ENCODE measurements at regions of chr11 and their contacts with region 1.

Region 1: DNA sequence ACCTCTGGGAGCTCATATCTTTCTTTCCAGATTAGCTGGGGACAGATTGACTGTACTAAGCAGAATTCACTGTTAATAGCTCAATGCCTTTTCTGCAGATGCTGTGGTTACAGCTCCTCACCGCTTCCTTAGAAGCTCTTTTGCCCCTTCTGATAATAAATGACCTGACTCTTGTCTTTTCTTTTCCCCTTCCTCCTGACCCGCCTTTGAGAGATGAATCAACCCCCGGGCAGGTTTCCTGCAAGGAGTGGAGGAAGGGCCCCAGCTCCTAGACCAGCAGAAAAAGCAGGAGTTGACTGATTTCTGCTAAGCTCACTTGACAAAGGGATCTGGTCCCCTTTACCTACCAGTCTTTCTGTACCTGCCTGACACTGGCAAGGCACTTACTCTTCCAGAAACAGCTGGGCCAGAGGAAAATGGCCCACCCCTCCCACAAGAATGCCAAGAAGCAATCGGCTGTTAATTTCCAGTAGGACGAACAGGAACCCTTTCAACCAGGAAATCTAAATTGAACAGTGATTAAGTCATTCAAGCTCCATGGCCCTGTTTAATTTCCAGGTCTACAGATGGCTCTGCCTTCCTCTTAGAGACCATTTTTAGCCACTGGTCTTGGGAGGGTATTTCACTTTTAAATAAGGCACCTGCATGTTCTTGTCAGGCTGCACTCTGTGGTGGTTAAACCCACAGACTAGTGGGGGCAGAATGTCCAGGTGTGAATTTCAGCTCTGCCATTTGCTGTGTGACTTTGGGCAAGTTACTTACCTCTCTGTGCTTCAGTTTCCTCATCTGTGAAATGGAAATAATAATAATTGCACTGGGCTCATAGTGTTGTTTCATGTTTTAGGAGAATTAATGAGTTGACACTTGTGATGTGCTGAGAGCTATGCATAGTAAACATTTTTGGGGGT is 67.5 kb downstream of the PRR5L start:
- DNase-seq: no peak
- ATAC-seq: no peak
- H3K4me3 ChIP-seq: no peak overlapping the region
- H3K4me3 Mint-ChIP-seq: no peak overlapping the region
- H3K27ac ChIP-seq: no peak overlapping the region
- H3K27ac Mint-ChIP-seq: peak overlapping the region; percentile 42
- H3K4me1 ChIP-seq: peaks cover 30% of the 10 kb centered on the region
- H3K4me1 Mint-ChIP-seq: peaks cover 53% of the 10 kb centered on the region
- H3K27me3 ChIP-seq: no peaks in the 10 kb centered on the region
- H3K27me3 Mint-ChIP-seq: peaks cover 9% of the 10 kb centered on the region
- CTCF ChIP-seq: no peak

Region 2: DNA sequence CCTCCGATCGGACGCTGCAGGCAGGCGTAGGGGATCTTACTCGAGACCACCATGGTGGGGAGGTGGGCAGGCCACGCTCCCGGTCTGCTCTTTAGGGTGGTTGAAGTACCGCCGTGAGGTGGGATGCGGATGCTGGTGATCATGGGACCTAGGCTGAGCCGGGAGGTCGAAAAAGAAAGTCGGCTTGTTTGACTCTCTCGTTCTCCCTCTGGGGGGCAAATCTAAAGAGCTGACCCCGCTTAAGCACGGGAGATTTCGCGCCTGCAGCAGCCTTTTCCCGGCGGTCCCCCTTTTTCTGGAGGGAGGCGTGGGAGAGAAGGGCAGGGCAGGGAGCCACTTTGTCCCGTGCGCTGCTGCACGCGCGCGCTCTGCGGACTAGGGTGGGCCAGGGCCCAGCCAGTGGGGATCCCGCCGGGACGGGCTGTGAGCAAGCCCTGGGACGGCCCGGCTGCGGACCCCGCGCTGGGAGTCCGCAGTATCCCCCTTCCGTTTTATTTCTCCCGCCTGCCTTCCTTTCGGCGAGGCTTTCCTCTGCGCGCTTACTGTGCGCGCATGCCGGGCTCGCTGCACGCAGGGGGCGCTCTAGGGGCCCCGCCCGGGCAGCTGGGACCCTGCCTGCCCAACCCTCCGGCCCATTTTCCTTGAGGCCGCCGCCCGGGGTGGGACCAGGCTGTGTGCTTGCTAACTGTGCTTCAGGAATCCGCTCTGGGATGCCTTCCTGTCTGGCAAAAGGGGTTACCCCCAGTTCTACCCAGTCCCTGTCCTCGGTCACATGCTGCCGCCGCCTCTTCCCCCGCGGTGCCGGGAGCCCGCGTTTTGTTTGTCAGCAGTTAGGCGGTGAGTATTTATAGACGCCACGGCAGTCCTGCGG is 13.5 kb after region 1 on chr11:
- CTCF ChIA-PET with region 1: interaction called, 7 read pairs
- POLR2A ChIA-PET with region 1: interaction called, 10 read pairs
- intact Hi-C with region 1: no loop called
- DNase-seq: peak; percentile 14 to 80 (median 34)
- ATAC-seq: peak; percentile 66
- H3K4me3 ChIP-seq: peak overlapping the region; percentile 78
- H3K4me3 Mint-ChIP-seq: peak overlapping the region; percentile 91
- H3K27ac ChIP-seq: peak overlapping the region; percentile 23 to 46
- H3K27ac Mint-ChIP-seq: peak overlapping the region; percentile 86
- H3K4me1 ChIP-seq: peaks cover 42% of the 10 kb centered on the region
- H3K4me1 Mint-ChIP-seq: peaks cover 39% of the 10 kb centered on the region
- H3K27me3 ChIP-seq: peaks cover 12 to 28% of the 10 kb centered on the region in 2 experiments
- H3K27me3 Mint-ChIP-seq: peaks cover 60% of the 10 kb centered on the region
- CTCF ChIP-seq: peak; percentile 42

Measured in CD4-positive, alpha-beta T cell (primary cell).